ENCODE measurements at regions of chr5 and their contacts with region 1.

Region 1: GRCh38 chr5:137695651-137696428 is 40.0 kb downstream of the KLHL3 start:
- DNase-seq: peak; percentile 28
- H3K4me3 Mint-ChIP-seq: peak overlapping the region; percentile 31
- H3K27ac Mint-ChIP-seq: peak overlapping the region; percentile 86
- H3K4me1 Mint-ChIP-seq: peaks cover 29% of the 10 kb centered on the region
- H3K27me3 Mint-ChIP-seq: no peaks in the 10 kb centered on the region

Region 2: GRCh38 chr5:137665678-137666460 is 30.0 kb before region 1 on chr5:
- CTCF ChIA-PET with region 1: interaction called, 58 read pairs
- POLR2A ChIA-PET with region 1: interaction called, 13 read pairs
- DNase-seq: peak; percentile 63
- H3K4me3 Mint-ChIP-seq: no peak overlapping the region
- H3K27ac Mint-ChIP-seq: peak overlapping the region; percentile 17
- H3K4me1 Mint-ChIP-seq: peaks cover 22% of the 10 kb centered on the region
- H3K27me3 Mint-ChIP-seq: no peaks in the 10 kb centered on the region

Region 3: DNA sequence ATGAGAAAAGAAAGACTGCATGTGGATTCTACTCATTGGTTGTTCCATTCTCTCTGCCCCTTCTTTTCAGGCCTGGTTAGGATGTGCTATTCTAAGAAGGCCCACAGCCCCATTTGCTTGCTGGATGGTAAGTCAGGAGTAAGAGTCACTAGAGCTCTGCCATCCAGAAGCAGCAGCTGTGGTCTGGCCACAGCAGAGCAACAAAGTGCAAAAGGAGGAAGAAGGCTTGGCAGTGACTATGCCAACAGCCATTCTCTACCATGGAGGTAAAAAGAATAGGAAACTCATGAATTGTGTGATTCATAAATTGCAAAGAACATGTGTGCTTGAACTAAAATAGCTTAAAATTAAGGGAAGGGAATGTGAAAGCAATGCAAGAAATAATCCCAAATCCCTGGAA is 19.1 kb after region 1 on chr5:
- CTCF ChIA-PET with region 1: no interaction called
- POLR2A ChIA-PET with region 1: no interaction called
- DNase-seq: no peak
- H3K4me3 Mint-ChIP-seq: no peak overlapping the region
- H3K27ac Mint-ChIP-seq: no peak overlapping the region
- H3K4me1 Mint-ChIP-seq: no peaks in the 10 kb centered on the region
- H3K27me3 Mint-ChIP-seq: no peaks in the 10 kb centered on the region

Region 4: DNA sequence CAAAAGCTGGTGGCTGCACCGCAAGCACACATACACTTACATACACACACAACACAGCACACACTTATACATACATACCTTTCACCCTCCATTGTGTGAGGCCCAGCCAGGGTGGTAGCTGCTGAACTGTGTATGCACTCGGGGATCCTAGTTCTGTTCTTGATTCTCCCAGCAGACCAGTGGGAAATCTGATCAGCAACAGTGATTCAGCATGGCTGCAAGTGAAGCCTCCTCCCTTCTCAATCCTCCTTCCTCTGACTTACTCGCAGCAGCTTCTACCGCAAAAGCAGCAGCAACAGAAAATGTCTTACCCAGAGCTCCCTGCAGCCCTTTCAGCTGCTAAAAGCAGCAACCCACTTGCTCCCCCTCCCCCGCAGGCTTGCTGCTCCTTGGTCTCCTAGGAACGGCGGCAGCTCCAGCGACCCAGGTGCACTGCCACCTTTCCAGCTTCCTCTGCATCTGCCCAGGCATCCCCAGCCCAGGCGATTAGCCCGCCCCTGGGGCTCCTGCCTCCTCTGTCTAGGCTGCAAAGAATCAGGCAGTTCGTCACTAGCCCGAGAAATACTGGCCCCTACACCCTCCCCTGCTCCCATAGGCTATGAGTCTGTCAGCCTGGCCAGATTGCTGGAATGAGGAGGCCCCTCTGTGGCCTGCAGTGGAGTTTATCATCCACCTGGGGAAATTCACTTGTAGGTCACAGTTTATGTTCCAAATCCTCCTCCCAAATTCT is 39.9 kb after region 1 on chr5 and contains the start of gene KLHL3:
- CTCF ChIA-PET with region 1: interaction called, 14 read pairs
- POLR2A ChIA-PET with region 1: interaction called, 4 read pairs
- DNase-seq: peak; percentile 31
- H3K4me3 Mint-ChIP-seq: no peak within 1 kb of the TSS
- H3K27ac Mint-ChIP-seq: no peak within 1 kb of the TSS
- H3K4me1 Mint-ChIP-seq: peaks cover 8% of the 10 kb centered on the region
- H3K27me3 Mint-ChIP-seq: peaks cover 6% of the 10 kb centered on the region
- total RNA-seq, gene KLHL3: 2.8 to 3.6 TPM

Region 5: DNA sequence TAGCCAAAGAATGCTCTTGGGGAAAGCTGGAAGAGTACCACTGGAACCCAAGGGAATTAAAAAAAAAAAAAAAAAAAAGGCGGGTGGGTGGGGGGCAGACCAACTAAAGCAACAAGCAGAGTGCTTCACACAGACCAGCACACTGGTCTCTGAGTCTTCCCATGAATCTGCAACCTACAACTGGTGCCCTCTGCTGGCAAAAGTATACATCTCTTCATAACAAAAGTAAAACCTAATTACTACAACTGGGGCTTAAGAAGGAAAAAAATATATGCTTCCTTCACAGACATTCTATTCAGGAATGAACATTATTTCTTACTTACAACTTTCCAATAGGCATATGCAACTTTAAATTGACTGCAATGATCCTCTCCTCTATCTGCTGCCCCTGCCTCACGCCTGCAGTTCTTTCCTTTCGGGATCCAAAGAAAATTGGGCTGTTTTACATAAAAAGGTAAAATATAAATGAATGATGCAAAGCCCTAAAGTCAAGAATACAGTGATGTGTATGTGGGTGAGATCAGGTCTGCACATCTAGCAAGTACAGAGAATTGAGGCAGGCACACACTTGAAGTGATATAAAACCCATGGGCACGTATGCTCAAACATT is 47.3 kb after region 1 on chr5:
- CTCF ChIA-PET with region 1: interaction called, 20 read pairs
- POLR2A ChIA-PET with region 1: interaction called, 4 read pairs
- DNase-seq: peak; percentile 61
- H3K4me3 Mint-ChIP-seq: no peak overlapping the region
- H3K27ac Mint-ChIP-seq: no peak overlapping the region
- H3K4me1 Mint-ChIP-seq: peaks cover 8% of the 10 kb centered on the region
- H3K27me3 Mint-ChIP-seq: no peaks in the 10 kb centered on the region

Region 6: GRCh38 chr5:137778772-137779564 is 83.1 kb after region 1 on chr5:
- CTCF ChIA-PET with region 1: no interaction called
- POLR2A ChIA-PET with region 1: no interaction called
- DNase-seq: no peak
- H3K4me3 Mint-ChIP-seq: no peak overlapping the region
- H3K27ac Mint-ChIP-seq: no peak overlapping the region
- H3K4me1 Mint-ChIP-seq: no peaks in the 10 kb centered on the region
- H3K27me3 Mint-ChIP-seq: peaks cover 13% of the 10 kb centered on the region

Measured in activated CD4-positive, alpha-beta memory T cell treated with anti-CD3 and anti-CD28 coated beads, Interleukin-2, amount 10 ng/mL, durations not matched to agents 7 days and 5 days (primary cell).